Cardiac septum (tissue), 1 donor: ENCODE measurements at regions of chr17 and their contacts with region 1.

Region 1: DNA sequence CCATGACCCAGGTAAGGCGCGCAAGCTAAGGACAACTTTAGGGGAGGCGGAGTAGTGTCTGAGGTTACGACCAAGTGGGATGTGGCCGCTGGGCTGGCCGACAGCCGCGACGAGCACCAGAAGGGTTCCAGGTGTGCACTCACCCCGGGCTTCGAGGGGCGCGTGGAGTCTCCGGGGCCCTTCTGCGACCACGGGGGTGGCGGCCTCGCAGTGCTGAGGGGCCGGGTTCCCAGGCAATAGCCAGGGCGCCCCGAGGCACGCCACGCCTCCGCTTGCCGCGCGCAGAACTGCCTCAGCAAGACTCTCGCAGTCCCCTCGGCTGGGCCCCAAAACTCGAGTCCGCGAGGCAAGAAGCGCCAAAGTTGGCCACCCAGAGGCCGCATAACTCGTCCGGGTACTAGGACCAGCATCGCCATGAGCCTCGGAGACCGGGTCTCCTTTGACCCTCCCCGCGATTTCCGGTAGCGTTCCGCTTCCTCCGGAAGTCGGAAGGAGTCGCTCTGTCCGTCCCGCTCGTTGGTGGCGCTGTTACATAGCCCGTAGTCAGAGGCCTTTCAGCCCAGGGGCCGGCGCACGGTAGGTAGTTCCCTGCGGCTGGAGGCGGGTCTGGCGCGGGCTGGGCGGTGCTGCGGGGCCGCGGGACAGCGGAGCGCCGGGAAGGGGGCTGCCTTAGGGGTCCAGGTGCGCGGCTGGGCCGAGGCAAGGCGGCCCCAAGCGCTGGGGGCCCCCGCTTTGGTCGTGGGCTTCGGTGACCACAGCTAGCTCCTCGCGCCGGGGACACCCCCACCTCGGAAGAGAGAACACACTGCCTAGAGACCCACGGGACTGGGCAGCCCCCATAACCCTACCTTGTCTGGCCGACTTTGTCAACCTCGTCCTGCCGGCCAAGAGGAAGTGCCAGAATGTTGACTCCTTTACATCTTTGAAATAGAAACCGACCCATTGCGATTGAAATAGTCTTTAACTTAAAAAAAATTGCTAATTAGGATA is at the starts of genes ADPRM and SCO1:
- DNase-seq: peak; percentile 98
- total RNA-seq, gene ADPRM: 4.4 TPM
- total RNA-seq, gene SCO1: 36.3 TPM

Region 2: DNA sequence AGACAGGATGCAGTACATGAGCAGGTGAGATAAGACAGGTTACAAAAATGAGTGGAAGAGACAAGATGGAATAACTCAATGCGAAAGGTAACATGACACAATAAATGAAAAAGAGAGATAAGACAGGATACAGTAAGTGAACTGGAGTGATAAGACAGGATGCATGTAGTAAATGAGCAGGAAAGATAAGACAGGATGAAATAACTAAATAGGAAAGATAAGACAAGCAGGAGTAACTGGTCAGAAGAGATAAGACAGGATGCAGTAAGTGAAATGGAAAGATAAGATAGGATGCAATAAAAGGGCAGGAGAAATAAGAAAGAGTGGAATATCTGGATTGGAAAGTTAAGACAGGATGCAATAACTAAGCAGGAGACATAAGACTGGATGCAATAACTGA is 219.7 kb before region 1 on chr17:
- intact Hi-C with region 1: no loop called
- DNase-seq: no peak

Region 3: GRCh38 chr17:10729334-10730193 is 32.2 kb after region 1 on chr17 and contains the start of gene TMEM220:
- intact Hi-C with region 1: loop called (anchors 1 kb)
- DNase-seq: peak; percentile 88
- total RNA-seq, gene TMEM220: 3.7 TPM